ENCODE measurements at regions of chr4 and their contacts with region 1.

Region 1: DNA sequence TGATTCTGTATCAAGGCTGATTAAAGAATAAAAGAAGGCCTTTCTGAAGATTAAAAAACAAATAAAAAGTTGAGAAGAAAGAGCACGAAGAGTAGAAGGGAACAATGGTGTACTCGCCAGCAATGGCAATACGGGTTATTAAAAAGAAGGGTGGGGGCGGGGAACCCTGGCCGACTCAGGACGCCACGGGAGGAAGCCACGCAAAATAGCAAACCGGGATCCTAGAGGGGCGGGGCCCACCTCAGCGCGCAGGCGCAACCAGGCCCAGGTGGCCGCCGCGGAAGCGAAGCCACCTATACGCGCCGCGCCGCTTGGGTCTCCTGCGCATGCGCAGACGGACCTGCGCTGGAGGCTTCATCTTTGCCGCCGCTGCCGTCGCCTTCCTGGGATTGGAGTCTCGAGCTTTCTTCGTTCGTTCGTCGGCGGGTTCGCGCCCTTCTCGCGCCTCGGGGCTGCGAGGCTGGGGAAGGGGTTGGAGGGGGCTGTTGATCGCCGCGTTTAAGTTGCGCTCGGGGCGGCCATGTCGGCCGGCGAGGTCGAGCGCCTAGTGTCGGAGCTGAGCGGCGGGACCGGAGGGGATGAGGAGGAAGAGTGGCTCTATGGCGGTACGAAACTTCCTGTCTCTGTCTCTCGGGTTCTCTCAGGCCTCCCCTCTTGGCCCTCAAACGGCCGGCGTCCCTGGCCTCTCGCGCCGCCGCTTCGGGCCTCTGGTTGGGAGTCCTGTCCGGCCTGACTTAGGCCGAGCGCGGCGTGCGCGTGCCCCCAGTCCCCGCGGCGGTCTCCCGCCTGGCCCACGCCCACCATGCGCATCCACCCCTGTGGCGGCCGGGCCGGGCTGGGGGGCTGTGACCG is at the start of gene FIP1L1:
- DNase-seq: peak; percentile 91 to 98 (median 96)
- ATAC-seq: peak; percentile 93 to 94
- H3K4me3 Mint-ChIP-seq: peak within 1 kb of the TSS; percentile 95 to 100 (median 99)
- H3K27ac Mint-ChIP-seq: peak within 1 kb of the TSS; percentile 97 to 100 (median 99)
- H3K4me1 Mint-ChIP-seq: peaks cover 12 to 46% (median 40%) of the 10 kb centered on the region in 4 donors
- H3K27me3 Mint-ChIP-seq: peaks cover under 1 to 9% (median 6%) of the 10 kb centered on the region in 5 donors
- polyA plus RNA-seq, gene FIP1L1: 55.3 to 72.2 (median 65.7) TPM

Region 2: DNA sequence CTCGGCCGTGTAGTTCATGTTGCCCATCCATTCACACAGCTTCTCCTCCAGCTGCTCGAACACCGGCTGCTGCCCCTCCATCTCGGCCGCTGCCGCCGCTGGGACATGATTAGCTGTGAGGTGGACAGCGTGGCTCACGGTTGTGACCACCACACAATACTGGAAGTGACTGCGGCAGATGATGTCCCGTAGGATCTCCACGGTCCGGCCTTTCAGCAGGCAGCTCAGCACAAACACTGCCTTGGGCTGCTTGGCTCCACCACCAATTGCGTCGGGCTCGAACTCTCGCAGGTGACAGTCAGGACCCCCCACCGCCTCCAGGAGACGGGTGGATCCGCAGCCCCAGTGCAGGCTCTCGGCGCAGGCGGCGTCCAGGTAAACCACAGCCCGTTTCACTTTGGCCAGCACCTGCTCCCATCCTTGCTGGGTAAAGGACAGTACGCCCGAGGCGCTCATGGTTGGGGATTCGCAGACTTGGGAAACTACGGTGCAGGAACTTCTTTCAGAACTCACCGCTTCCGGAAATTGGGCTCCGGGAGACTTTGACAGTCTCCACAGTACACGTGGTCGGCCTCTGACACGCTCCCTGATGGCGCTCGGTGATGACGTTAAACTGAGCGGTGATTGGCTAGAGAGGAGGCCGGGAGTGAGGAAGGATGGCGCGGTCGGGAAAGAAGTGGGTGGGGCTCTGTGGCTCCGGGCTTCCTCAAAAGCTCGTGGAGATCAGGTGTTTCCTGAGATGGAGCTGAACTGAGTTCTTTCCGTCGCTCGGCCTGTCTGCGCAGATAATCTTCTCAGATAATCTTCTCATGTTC is 11.9 kb before region 1 on chr4 and contains the start of gene SCFD2:
- POLR2A ChIA-PET with region 1: interaction called, 23 read pairs
- DNase-seq: peak; percentile 86 to 98 (median 96)
- ATAC-seq: peak; percentile 95 to 96
- H3K4me3 Mint-ChIP-seq: peak within 1 kb of the TSS; percentile 92 to 99 (median 96)
- H3K27ac Mint-ChIP-seq: peak within 1 kb of the TSS; percentile 96 to 99 (median 98)
- H3K4me1 Mint-ChIP-seq: peaks cover 32 to 59% (median 49%) of the 10 kb centered on the region in 4 donors
- H3K27me3 Mint-ChIP-seq: peaks cover 0 to 6% (median 5%) of the 10 kb centered on the region in 5 donors
- polyA plus RNA-seq, gene SCFD2: 17.2 to 21.7 (median 18.9) TPM

Measured in naive thymus-derived CD8-positive, alpha-beta T cell (primary cell).